Esophagus muscularis mucosa (tissue), 4 donors: ENCODE measurements at regions of chr17 and their contacts with region 1.

Region 1: DNA sequence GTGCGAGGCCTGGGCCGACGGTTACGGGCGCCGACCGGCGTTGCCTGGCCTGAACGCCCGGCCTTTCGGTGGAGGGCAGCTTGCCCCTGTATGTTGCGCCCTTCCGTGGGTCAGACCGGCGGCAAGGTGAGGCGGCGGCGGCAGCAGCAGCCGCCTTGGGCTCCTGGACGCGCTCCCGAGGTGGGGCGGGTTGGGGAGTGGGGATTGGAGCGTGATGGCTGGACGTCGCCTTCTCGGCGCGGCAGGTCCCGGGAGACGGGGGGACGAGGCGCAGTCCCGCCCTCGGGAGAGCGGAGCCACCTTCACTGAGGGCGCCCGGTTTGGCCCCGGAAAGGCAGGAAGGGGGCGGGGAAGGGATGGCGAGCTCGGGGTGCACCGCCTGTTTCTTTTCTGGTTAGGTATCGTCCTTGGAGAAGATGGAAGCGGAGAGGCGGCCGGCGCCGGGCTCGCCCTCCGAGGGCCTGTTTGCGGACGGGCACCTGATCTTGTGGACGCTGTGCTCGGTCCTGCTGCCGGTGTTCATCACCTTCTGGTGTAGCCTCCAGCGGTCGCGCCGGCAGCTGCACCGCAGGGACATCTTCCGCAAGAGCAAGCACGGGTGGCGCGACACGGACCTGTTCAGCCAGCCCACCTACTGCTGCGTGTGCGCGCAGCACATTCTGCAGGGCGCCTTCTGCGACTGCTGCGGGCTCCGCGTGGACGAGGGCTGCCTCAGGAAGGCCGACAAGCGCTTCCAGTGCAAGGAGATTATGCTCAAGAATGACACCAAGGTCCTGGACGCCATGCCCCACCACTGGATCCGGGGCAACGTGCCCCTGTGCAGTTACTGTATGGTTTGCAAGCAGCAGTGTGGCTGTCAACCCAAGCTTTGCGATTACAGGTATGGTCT is 673 bp downstream of the DGKE start:
- DNase-seq: no peak
- H3K4me3 ChIP-seq: peak overlapping the region; percentile 67 to 86 (median 78)
- H3K27ac ChIP-seq: peak overlapping the region; percentile 88 to 94 (median 91)
- H3K4me1 ChIP-seq: peaks cover 11 to 65% (median 53%) of the 10 kb centered on the region in 4 donors
- H3K27me3 ChIP-seq: no peaks in the 10 kb centered on the region
- CTCF ChIP-seq: peak in 1 of 3 experiments; percentile 30
- EP300 ChIP-seq: no peak
- POLR2A ChIP-seq: no peak

Region 2: DNA sequence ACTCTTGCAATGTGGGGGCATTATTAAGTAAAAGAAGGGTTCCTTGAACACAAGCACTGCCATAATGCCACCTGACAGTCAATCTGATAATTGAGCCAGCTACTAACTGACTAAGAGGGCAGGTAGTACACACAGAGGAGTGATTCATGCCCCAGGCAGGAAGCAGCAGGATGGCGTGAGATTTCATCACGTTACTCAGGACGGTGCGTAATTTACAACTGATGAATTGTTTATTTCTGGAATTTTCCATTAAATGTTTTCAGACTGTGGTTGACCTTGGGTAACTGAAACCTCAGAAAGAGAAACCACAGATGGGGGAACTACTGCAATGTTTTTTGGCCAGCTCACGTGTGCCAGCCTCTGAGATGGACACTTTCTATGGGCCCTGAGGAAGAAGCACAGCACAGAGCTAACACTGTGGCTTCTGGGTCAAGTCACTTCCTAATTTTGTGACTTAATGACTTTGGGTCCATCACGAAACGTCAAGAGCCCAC is 47.6 kb before region 1 on chr17:
- intact Hi-C with region 1: no loop called
- DNase-seq: no peak
- H3K4me3 ChIP-seq: no peak overlapping the region
- H3K27ac ChIP-seq: no peak overlapping the region
- H3K4me1 ChIP-seq: no peaks in the 10 kb centered on the region
- H3K27me3 ChIP-seq: no peaks in the 10 kb centered on the region
- CTCF ChIP-seq: no peak
- EP300 ChIP-seq: no peak
- POLR2A ChIP-seq: no peak

Region 3: DNA sequence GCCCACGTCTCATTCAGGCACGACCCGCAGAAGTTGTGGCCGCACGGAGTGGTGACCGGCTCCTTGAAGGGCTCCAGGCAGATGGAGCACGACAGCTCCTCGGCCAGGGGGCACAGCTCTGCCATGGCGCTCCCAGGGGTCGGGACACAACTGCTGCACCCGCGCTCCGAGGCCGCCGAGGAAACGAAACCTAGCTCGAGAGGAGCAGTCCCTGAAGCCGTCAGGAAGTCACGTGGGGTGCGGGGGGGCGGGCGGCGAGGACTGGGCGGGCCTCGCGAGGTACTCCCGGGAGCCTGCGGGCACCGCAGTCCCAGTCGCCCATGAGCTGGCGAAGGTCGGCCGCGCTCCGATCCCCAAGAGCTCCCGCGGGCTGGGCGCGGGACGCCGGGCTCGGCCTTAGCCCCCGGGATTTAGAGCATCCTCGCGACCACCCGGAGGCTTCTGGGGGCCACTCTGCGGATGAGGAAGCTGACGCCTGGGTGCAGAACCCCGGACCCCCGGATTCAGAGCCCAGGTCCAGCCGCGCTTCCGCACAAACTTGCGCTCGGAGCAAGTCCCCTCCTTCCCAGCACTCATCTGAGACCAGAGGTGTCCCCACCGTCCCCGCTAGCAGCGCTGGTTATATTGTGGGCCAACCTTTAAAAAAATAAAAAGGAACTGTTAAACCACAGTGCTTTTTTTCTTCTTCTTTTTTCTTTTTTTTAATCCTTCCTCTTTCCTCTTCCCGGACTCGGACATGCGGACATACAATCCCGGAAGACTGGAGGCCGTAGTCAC is 79.4 kb after region 1 on chr17 and contains the start of gene TRIM25:
- intact Hi-C with region 1: loop called (anchors 5 kb)
- DNase-seq: peak; percentile 98
- H3K4me3 ChIP-seq: peak within 1 kb of the TSS; percentile 74 to 97 (median 82)
- H3K27ac ChIP-seq: peak within 1 kb of the TSS; percentile 83 to 93 (median 88)
- H3K4me1 ChIP-seq: peaks cover 44 to 63% (median 60%) of the 10 kb centered on the region in 4 donors
- H3K27me3 ChIP-seq: no peaks in the 10 kb centered on the region
- CTCF ChIP-seq: no peak
- EP300 ChIP-seq: no peak
- POLR2A ChIP-seq: peak; percentile 97
- total RNA-seq, gene TRIM25: 13.9 to 19.9 (median 16.6) TPM